IMR-90 (cell line): ENCODE measurements at regions of chr5 and their contacts with region 1.

Region 1: DNA sequence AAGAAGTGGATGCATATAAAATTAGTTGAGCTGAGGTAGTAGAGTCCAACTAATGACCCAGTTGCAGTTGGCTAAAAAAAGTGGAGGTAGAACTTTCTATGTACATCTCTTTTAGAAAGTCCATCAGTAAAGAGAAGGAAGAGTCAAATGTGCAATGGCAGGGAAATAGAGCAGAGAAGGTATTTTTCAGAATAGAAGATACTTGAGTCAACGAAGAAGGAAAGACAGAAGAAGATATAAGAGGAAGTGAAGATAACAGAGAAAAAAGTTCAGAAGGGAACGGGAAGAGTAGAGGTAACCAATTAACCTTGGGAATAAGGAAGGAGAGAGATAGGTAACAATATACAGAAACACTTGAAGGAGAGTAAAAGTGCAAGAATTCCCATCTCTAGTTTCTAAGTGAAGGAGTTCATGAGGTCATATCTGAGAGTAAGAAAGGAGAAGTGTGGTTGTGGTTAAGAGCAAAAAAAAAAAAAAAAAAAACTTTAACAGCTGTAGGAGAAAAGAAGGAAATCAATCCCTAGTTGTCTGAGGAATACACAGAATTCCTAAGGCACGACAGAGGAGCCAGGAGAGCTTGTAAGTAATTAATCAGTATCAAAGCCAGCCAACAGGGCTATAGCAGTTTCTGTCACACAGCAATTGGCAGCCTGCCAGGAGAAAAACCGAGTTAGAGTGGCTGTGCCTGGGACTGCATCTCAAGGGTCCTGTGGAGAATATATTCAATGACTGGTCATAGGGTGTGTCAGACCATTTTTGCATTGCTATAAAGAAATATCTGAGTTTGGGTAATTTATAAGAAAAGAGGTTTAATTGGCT is 61.0 kb downstream of the ARL15 start:
- DNase-seq: peak; percentile 41
- ATAC-seq: no peak
- H3K4me3 ChIP-seq: no peak overlapping the region
- H3K27ac ChIP-seq: no peak overlapping the region
- H3K4me1 ChIP-seq: no peaks in the 10 kb centered on the region
- H3K27me3 ChIP-seq: no peaks in the 10 kb centered on the region
- CTCF ChIP-seq: no peak
- POLR2A ChIP-seq: no peak
- RAD21 ChIP-seq: no peak

Region 2: DNA sequence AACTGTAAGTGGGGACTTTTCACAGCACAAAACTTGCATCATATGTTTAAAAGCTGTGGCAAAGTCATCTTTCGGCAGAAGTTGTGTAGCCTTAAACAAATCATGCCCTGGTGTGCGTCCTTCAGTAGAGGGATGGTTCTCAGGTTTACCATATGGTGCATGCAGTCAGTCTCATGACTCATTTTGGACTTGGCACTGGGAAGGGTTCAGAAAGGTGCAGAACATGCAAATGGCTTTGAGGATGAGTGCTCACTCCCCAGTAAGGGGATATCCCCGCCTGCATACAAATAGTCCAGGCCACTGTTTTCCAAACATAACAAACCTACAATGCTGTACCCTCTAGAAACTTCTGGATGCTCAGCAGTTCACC is 428.6 kb before region 1 on chr5:
- CTCF ChIA-PET with region 1: no interaction called
- POLR2A ChIA-PET with region 1: no interaction called
- dilution Hi-C with region 1: no loop called
- in situ Hi-C with region 1: no loop called
- intact Hi-C with region 1: no loop called
- DNase-seq: peak; percentile 11
- ATAC-seq: no peak
- H3K4me3 ChIP-seq: no peak overlapping the region
- H3K27ac ChIP-seq: no peak overlapping the region
- H3K4me1 ChIP-seq: peaks cover 2% of the 10 kb centered on the region; the same call in 1 of the 2 replicates
- H3K27me3 ChIP-seq: peaks cover 11% of the 10 kb centered on the region
- CTCF ChIP-seq: no peak
- POLR2A ChIP-seq: no peak
- RAD21 ChIP-seq: no peak

Region 3: DNA sequence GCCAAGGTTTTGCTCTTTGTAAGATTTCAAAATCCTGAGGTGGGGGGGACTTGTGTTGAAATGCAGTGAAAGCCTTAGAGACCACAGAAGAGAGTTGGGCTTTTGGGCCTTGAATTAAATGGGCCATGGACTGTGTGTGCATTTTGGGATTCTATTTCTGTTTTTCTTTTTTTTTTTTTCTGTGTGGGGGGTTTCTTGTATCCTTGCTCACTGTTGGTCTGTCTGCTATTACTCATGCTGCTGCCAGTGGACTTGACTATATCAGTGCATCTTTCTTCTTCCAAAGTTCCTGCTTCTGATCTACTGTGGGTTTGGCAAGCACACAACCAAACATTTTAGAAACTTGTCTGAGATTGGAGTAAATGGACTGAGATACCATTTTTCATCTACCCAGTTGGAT is 284.0 kb before region 1 on chr5:
- CTCF ChIA-PET with region 1: no interaction called
- POLR2A ChIA-PET with region 1: no interaction called
- dilution Hi-C with region 1: no loop called
- in situ Hi-C with region 1: no loop called
- intact Hi-C with region 1: no loop called
- DNase-seq: no peak
- ATAC-seq: no peak
- H3K4me3 ChIP-seq: no peak overlapping the region
- H3K27ac ChIP-seq: no peak overlapping the region
- H3K4me1 ChIP-seq: no peaks in the 10 kb centered on the region
- H3K27me3 ChIP-seq: no peaks in the 10 kb centered on the region
- CTCF ChIP-seq: no peak
- POLR2A ChIP-seq: no peak
- RAD21 ChIP-seq: no peak

Region 4: GRCh38 chr5:54492178-54492577 is 242.8 kb after region 1 on chr5:
- CTCF ChIA-PET with region 1: interaction called, 7 read pairs
- POLR2A ChIA-PET with region 1: no interaction called
- dilution Hi-C with region 1: no loop called
- in situ Hi-C with region 1: loop called (anchors 10 kb)
- intact Hi-C with region 1: no loop called
- DNase-seq: no peak
- ATAC-seq: no peak
- H3K4me3 ChIP-seq: no peak overlapping the region
- H3K27ac ChIP-seq: no peak overlapping the region
- H3K4me1 ChIP-seq: no peaks in the 10 kb centered on the region; the same call in 1 of the 2 replicates
- H3K27me3 ChIP-seq: peaks cover 14% of the 10 kb centered on the region; the same call in 1 of the 2 replicates
- CTCF ChIP-seq: no peak
- POLR2A ChIP-seq: no peak
- RAD21 ChIP-seq: no peak

Region 5: GRCh38 chr5:54895816-54896341 is 646.5 kb after region 1 on chr5:
- CTCF ChIA-PET with region 1: interaction called, 3 read pairs
- POLR2A ChIA-PET with region 1: no interaction called
- dilution Hi-C with region 1: no loop called
- in situ Hi-C with region 1: loop called (anchors 10 kb)
- intact Hi-C with region 1: no loop called
- DNase-seq: peak; percentile 68
- ATAC-seq: peak; percentile 92
- H3K4me3 ChIP-seq: no peak overlapping the region
- H3K27ac ChIP-seq: no peak overlapping the region
- H3K4me1 ChIP-seq: peaks cover 5% of the 10 kb centered on the region; the same call in 1 of the 2 replicates
- H3K27me3 ChIP-seq: peaks cover 4% of the 10 kb centered on the region; the same call in 1 of the 2 replicates
- CTCF ChIP-seq: peak; percentile 72
- POLR2A ChIP-seq: no peak
- RAD21 ChIP-seq: peak; percentile 76